HAP-1 (cell line): ENCODE measurements at regions of chr5 and their contacts with region 1.

Region 1: DNA sequence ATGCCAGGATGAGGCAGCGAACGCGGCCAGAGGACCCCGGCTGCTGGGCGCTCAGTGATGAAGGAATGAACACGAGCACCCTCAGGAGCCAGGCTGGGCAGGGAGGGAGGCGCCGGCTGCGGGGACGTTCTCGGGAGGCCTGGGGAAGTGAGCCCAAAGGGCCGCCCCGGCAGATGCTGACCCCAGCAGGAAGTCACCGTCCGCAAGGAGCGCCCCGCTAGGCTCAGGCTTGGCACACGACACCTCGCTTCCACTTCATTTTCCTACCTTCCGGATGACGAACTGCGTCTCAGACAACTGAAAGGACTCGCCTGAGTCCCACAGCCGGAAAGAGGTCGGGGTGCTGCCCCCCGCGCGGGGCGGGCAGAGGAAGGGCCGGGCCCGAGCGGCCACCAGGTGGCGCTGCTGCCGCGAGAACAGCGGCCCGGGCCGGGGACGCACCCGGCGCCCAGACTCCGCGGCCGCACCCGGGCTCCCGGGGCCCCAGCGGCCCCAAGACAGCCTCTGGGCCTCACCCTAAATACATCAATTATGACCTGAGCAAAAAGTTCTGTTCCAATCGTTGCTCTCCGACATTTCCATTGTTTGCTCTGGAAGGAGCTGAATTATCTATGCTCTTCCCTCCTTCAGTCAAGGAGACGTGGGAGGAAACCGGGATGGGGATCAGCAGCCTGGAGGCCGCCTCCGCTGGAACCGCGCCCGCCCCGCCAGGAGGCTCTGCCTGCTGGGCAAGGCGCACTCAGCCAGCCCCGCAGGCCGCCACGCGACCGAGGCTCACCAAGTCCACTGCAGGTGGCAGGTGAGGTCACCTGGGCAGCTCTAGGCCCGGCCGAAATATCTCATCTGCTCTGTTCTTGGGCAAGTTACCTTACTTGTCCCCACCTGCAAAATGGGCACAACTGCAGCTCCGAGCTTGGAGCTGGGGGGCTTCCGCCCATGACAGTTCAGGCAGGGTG is 107.0 kb downstream of the ZNF354C start:
- DNase-seq: peak; percentile 43 to 78
- H3K4me3 ChIP-seq: peak overlapping the region; percentile 6; the same call in 1 of the 2 replicates
- H3K4me1 ChIP-seq: no peaks in the 10 kb centered on the region
- H3K27me3 ChIP-seq: no peaks in the 10 kb centered on the region

Region 2: DNA sequence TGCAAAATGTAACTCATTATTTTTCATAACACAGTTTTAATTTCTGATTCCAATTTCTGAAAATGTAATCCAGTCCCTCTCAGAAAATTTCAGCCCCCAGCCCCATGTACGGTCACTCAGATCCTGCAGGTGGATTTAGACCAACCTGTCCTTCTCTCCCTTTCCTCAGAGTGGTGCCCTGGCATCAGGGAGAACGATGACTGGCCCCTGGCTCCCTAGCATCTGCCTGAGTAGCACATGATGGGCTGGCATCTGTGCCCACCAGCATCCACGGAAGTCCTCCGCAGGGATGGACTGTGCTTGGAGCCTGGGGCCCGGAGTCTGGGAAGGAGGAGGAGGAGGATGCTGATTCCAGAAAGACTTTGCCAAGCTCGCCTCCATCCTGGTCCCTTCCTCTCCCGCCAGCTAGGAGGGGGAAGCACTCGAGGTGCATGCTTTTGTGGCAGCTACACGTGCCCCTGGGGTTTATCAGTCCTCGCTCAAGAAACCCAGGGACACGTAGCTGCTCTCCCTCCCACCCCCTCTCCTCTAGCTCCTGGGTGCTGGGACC is 328.8 kb after region 1 on chr5:
- in situ Hi-C with region 1: loop called (anchors 5 kb)
- DNase-seq: no peak
- H3K4me3 ChIP-seq: no peak overlapping the region
- H3K4me1 ChIP-seq: no peaks in the 10 kb centered on the region
- H3K27me3 ChIP-seq: no peaks in the 10 kb centered on the region